PC-3 (cell line): ENCODE measurements at regions of chr9 and their contacts with region 1.

Region 1: DNA sequence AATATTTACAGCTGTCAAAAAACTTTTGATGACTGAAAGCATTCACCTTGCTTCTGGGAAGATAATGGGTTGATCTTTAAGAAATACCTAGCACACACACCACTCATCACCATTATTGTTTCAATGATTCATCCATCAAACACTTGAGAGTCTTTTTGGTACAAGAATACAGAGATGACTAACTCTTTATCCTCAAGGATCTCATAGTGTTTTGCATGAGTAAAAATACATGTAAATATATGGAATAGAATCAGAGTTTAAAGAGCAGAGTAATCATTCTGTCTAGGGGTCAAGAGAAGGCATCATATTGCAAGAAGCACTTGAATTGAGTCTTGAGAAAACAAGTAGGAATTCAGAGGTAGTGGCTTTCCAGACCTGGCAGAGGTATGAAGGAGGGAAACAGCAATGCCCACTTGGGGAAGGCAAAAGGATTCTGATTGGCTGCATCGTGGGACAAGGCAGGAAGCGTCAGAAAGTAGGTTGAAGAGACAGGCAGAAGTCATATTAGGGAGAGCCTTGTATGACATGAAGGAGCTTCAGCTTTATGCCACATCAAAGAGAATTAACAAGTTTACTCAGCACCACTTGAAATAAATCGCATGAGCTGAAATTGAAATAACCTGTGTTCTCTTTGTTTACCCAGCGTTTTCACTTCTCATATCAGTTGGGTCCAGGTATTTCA is 542.5 kb downstream of the TLE1 start:
- DNase-seq: peak; percentile 85
- ATAC-seq: peak; percentile 88
- H3K4me3 ChIP-seq: 0 out of 2 replicates have a peak overlapping the region, but pooled peaks have one; percentile 12
- H3K27ac ChIP-seq: peak overlapping the region; percentile 82
- H3K4me1 ChIP-seq: peaks cover 40% of the 10 kb centered on the region
- H3K27me3 ChIP-seq: no peaks in the 10 kb centered on the region
- CTCF ChIP-seq: no peak

Region 2: DNA sequence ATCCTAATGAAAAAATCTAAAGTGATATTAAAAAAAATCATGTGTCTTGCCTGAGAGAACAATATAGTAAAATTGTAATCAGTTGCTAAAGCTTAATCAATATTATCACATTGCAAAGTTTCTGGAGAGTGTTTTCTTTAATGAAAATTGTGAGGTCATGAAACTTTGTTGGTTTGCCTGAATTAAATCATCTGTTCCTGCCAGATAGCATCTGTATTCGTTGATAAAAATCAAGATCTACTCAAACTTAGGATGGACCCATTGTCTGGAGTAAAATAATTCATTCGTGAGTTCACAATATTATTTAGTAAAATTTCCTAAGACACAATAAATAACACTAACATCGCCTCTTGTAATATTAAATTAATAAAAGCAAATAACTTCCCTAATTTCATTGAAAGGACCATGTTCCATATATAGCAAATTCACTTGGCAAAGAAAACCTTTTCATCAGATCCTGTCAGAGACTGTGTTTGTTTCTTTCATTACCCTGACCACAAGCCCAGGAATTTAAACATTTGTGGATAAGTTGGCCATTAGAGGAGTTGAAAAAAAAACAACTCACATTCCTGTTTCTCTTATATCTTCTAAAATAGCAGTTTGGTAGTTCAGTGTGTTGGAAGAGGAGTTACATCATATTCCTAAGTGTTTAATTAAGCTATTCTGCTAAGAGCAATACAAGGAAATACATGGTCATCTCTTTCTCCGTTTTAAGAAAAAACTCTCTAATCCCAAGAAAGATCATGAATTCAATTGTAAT is 36.8 kb after region 1 on chr9:
- CTCF ChIA-PET with region 1: no interaction called
- POLR2A ChIA-PET with region 1: no interaction called
- intact Hi-C with region 1: no loop called
- DNase-seq: peak; percentile 20
- ATAC-seq: peak; percentile 18; the same call in 1 of the 2 replicates
- H3K4me3 ChIP-seq: no peak overlapping the region
- H3K27ac ChIP-seq: no peak overlapping the region
- H3K4me1 ChIP-seq: peaks cover 13% of the 10 kb centered on the region; the same call in 1 of the 2 replicates
- H3K27me3 ChIP-seq: no peaks in the 10 kb centered on the region
- CTCF ChIP-seq: no peak

Region 3: DNA sequence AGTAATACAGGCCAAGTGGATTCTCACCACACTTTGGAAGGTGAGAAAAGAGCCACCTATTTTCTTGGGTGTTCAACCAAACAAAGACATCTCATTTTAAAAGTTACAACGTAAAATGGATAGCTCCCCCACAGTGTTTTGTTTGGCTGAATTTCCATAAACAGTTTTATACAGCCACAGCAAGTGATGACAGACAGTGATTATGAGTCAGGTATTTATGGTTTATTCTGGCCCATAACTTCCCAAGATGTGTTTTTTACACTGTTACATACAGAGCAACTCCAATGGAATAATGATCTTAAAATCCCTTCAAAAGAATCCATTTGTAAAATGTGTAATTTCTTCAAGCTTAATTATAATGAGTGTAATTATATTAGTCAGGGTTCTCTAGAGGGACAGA is 121.3 kb after region 1 on chr9:
- CTCF ChIA-PET with region 1: no interaction called
- POLR2A ChIA-PET with region 1: interaction called, 15 read pairs
- intact Hi-C with region 1: no loop called
- DNase-seq: peak; percentile 2
- ATAC-seq: peak; percentile 57; the same call in 1 of the 2 replicates
- H3K4me3 ChIP-seq: no peak overlapping the region
- H3K27ac ChIP-seq: no peak overlapping the region
- H3K4me1 ChIP-seq: peaks cover 5% of the 10 kb centered on the region
- H3K27me3 ChIP-seq: no peaks in the 10 kb centered on the region
- CTCF ChIP-seq: no peak